Dendritic cell treated with granulocyte-macrophage colony-stimulating factor and Interleukin-4, amounts not matched to agents 40 ng/mL and 50 ng/mL, for 4 days (primary cell): ENCODE measurements at regions of chr9 and their contacts with region 1.

Region 1: GRCh38 chr9:112717661-112718341 is at the start of gene INIP:
- H3K4me3 Mint-ChIP-seq: peak within 1 kb of the TSS; percentile 93
- H3K27ac Mint-ChIP-seq: peak within 1 kb of the TSS; percentile 92
- H3K4me1 Mint-ChIP-seq: peaks cover 25% of the 10 kb centered on the region
- H3K27me3 Mint-ChIP-seq: no peaks in the 10 kb centered on the region

Region 2: GRCh38 chr9:112366591-112366990 is 351.2 kb before region 1 on chr9:
- intact Hi-C with region 1: no loop called
- H3K4me3 Mint-ChIP-seq: no peak overlapping the region
- H3K27ac Mint-ChIP-seq: no peak overlapping the region
- H3K4me1 Mint-ChIP-seq: no peaks in the 10 kb centered on the region
- H3K27me3 Mint-ChIP-seq: peaks cover 2% of the 10 kb centered on the region

Region 3: GRCh38 chr9:112379177-112380101 is 338.4 kb before region 1 on chr9:
- intact Hi-C with region 1: loop called (anchors 5 kb)
- H3K4me3 Mint-ChIP-seq: peak overlapping the region; percentile 91
- H3K27ac Mint-ChIP-seq: peak overlapping the region; percentile 98
- H3K4me1 Mint-ChIP-seq: peaks cover 50% of the 10 kb centered on the region
- H3K27me3 Mint-ChIP-seq: no peaks in the 10 kb centered on the region

Region 4: DNA sequence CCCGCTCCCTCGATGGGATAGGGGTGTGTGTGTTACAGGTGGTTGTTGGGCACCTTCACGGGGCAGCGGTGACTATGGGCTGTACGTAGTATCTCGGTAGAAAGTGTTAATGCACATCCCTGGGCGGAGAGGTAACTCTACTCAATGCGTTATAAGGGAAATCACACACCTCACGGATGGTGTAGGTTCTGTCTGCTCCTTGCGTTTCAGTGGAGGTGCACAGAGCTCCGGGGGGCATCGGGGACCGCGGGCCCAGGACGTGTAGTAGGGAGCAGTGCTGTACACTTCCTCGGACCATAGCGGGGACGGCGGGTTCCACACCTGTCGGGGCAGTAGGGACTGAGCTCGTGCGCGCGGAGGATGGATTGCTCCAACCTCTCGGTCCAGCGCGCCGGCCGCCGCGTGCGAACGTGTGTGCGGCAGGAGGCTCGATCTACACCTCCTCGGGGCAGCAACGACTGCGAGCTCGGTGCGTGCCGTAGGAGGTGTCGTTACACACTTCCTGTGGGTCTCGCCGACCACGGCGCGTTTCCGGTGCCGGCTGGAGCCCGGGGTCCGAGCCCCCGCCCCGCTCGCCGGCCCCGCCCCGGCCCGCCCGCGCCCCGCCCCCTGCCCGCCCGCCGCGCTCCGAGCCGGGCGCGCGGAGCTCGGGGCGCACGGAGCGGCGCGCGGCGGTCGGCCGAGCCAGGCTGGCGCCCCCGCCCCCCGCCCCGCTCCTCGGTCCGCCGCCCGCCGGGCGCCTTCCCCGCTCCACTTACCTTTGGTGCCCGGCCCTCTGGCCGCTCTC is 231.4 kb before region 1 on chr9 and contains the start of gene KIAA1958:
- intact Hi-C with region 1: loop called (anchors 10 kb)
- H3K4me3 Mint-ChIP-seq: peak within 1 kb of the TSS; percentile 90
- H3K27ac Mint-ChIP-seq: peak within 1 kb of the TSS; percentile 58
- H3K4me1 Mint-ChIP-seq: peaks cover 14% of the 10 kb centered on the region
- H3K27me3 Mint-ChIP-seq: peaks cover 12% of the 10 kb centered on the region

Region 5: GRCh38 chr9:112497944-112498343 is 219.9 kb before region 1 on chr9:
- intact Hi-C with region 1: no loop called
- H3K4me3 Mint-ChIP-seq: no peak overlapping the region
- H3K27ac Mint-ChIP-seq: no peak overlapping the region
- H3K4me1 Mint-ChIP-seq: peaks cover 26% of the 10 kb centered on the region
- H3K27me3 Mint-ChIP-seq: no peaks in the 10 kb centered on the region

Region 6: DNA sequence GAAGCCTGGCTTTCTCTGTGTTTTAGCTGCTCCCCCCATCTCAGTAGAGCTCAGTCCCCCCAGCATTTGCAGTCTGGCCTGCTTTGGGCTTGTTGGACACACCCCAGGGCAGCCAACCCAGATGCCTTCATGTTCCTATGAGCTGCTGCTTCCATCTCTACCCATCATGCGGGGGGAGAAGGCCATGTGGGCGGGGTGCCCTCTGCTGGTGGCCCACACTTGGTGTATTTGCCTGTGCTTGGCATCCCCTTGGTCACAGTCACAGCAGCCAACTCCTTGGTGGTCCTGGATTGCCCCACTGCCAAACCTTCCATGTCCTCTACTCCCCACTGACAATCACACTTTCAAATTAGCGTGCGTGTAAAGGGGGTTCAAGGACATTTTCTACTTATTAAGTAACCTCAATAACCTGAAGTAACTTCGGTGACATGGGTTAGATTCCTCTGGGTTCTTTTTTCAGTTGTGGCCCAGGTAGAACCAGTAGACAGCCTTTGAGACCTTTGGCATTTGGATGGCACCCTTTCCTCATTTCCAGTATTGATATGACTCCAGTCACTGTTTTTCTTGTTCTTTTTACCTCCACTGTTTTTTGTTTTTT is 75.5 kb after region 1 on chr9:
- intact Hi-C with region 1: loop called (anchors 5 kb)
- H3K4me3 Mint-ChIP-seq: no peak overlapping the region
- H3K27ac Mint-ChIP-seq: no peak overlapping the region
- H3K4me1 Mint-ChIP-seq: peaks cover 58% of the 10 kb centered on the region
- H3K27me3 Mint-ChIP-seq: no peaks in the 10 kb centered on the region

Region 7: GRCh38 chr9:112905084-112905483 is 187.3 kb after region 1 on chr9:
- intact Hi-C with region 1: loop called (anchors 10 kb)
- H3K4me3 Mint-ChIP-seq: no peak overlapping the region
- H3K27ac Mint-ChIP-seq: no peak overlapping the region
- H3K4me1 Mint-ChIP-seq: peaks cover 18% of the 10 kb centered on the region
- H3K27me3 Mint-ChIP-seq: peaks cover 4% of the 10 kb centered on the region